ENCODE measurements at regions of chr2 and their contacts with region 1.

Region 1: GRCh38 chr2:223993621-223994232 is 36.5 kb downstream of the MRPL44 start:
- DNase-seq: peak; percentile 90
- H3K4me3 Mint-ChIP-seq: no peak overlapping the region
- H3K27ac Mint-ChIP-seq: no peak overlapping the region
- H3K4me1 Mint-ChIP-seq: peaks cover 10% of the 10 kb centered on the region
- H3K27me3 Mint-ChIP-seq: no peaks in the 10 kb centered on the region

Region 2: DNA sequence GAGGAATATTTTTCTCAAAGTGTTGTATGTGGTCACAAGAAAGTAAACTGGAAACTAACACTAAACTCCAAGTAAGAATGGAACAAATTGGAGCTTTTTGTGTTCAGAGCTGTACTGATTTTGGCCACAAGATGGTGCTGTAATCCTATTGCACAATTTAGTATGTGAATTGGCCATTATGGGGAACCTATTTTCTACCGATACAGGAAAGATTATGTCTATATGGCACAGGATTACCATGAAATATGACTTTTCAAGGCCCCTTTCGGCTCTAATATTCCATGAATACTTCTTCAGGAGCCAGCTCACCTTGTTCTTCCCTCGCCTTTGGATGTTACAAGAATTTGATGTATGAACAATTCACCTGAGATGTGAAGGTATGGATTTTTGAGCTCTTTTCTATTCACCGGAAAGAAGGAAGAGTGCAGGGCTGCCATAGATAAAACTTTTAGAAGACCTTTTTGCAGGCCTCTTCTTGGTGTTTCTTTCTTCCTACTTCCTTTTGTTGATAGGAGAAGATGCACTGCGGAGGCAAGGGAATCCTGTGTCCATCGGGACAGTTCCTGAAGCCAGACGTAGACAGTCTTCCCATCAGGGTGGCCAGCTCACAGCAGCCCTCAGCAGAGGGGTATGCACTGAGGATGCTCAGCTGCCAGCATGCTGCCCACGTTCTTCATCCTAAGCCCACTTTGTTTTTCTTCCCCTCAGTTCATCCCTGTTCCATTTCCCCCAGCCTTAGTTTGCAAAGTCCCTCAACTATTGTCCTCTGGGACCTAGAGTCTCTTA is 23.2 kb before region 1 on chr2:
- intact Hi-C with region 1: loop called (anchors 2 kb)
- DNase-seq: peak; percentile 90
- H3K4me3 Mint-ChIP-seq: no peak overlapping the region
- H3K27ac Mint-ChIP-seq: no peak overlapping the region
- H3K4me1 Mint-ChIP-seq: peaks cover 9% of the 10 kb centered on the region
- H3K27me3 Mint-ChIP-seq: no peaks in the 10 kb centered on the region

Region 3: GRCh38 chr2:224025874-224026273 is 32.1 kb after region 1 on chr2:
- intact Hi-C with region 1: loop called (anchors 2 kb)
- DNase-seq: peak; percentile 90
- H3K4me3 Mint-ChIP-seq: peak overlapping the region; percentile 46
- H3K27ac Mint-ChIP-seq: peak overlapping the region; percentile 95
- H3K4me1 Mint-ChIP-seq: peaks cover 64% of the 10 kb centered on the region
- H3K27me3 Mint-ChIP-seq: no peaks in the 10 kb centered on the region

Region 4: GRCh38 chr2:224039124-224039940 is 45.6 kb after region 1 on chr2 and contains the start of gene SERPINE2:
- intact Hi-C with region 1: loop called (anchors 2 kb)
- DNase-seq: peak; percentile 87
- H3K4me3 Mint-ChIP-seq: peak within 1 kb of the TSS; percentile 97
- H3K27ac Mint-ChIP-seq: peak within 1 kb of the TSS; percentile 49
- H3K4me1 Mint-ChIP-seq: peaks cover 23% of the 10 kb centered on the region
- H3K27me3 Mint-ChIP-seq: peaks cover 49% of the 10 kb centered on the region
- total RNA-seq, gene SERPINE2: 23.2 and 23.9 TPM in 2 replicates

Region 5: GRCh38 chr2:224062481-224063297 is 69.0 kb after region 1 on chr2:
- intact Hi-C with region 1: loop called (anchors 1 kb)
- DNase-seq: no peak
- H3K4me3 Mint-ChIP-seq: no peak overlapping the region
- H3K27ac Mint-ChIP-seq: no peak overlapping the region
- H3K4me1 Mint-ChIP-seq: no peaks in the 10 kb centered on the region
- H3K27me3 Mint-ChIP-seq: peaks cover 14% of the 10 kb centered on the region

Region 6: DNA sequence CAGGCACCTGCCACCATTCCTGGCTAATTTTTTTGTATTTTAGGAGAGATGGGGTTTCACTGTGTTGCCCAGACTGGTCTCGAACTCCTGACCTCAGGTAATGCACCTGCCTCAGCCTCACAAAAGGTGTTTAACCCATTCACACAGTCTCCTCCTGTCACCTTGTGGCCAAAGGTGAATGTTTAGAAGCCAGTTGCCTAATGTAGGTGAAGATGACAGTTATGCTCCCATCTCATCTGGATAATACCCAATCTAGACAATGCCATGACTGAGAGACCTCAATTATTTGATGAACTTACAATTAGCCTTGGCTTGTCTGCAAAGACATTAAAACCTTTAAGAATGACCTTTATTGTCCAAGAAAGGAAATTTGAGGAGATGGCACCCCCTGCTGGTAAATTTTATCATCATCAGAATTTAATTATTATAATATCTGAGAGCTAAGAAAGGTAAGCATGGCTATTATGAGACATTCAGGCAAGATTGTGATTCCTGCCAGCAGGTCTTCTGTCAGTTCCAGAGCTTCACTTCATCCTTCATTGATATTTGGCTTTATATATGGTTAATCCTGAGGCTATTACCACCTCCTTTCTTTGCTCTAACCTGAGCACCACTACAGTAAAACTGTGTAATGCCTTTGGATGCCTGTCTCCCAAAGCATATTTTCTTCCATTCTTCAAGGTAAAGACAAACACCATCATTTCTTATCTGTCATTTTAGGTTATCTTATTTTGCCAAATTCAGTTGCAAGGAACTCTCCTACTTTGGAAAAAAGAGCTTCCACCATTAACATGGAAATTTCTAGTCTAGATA is 290.6 kb after region 1 on chr2:
- intact Hi-C with region 1: loop called (anchors 1 kb)
- DNase-seq: peak; percentile 72
- H3K4me3 Mint-ChIP-seq: no peak overlapping the region
- H3K27ac Mint-ChIP-seq: no peak overlapping the region
- H3K4me1 Mint-ChIP-seq: no peaks in the 10 kb centered on the region
- H3K27me3 Mint-ChIP-seq: peaks cover 37% of the 10 kb centered on the region

Region 7: GRCh38 chr2:224369028-224369632 is 375.4 kb after region 1 on chr2:
- intact Hi-C with region 1: loop called (anchors 5 kb)
- DNase-seq: peak; percentile 72
- H3K4me3 Mint-ChIP-seq: no peak overlapping the region
- H3K27ac Mint-ChIP-seq: no peak overlapping the region
- H3K4me1 Mint-ChIP-seq: no peaks in the 10 kb centered on the region
- H3K27me3 Mint-ChIP-seq: peaks cover 13% of the 10 kb centered on the region

Measured in activated CD4-positive, alpha-beta T cell treated with anti-CD3 and anti-CD28 coated beads, Interleukin-2, amount 10 ng/mL, durations not matched to agents 24 days and 14 days (primary cell).